AG04449 (cell line): ENCODE measurements at regions of chr17 and their contacts with region 1.

Region 1: DNA sequence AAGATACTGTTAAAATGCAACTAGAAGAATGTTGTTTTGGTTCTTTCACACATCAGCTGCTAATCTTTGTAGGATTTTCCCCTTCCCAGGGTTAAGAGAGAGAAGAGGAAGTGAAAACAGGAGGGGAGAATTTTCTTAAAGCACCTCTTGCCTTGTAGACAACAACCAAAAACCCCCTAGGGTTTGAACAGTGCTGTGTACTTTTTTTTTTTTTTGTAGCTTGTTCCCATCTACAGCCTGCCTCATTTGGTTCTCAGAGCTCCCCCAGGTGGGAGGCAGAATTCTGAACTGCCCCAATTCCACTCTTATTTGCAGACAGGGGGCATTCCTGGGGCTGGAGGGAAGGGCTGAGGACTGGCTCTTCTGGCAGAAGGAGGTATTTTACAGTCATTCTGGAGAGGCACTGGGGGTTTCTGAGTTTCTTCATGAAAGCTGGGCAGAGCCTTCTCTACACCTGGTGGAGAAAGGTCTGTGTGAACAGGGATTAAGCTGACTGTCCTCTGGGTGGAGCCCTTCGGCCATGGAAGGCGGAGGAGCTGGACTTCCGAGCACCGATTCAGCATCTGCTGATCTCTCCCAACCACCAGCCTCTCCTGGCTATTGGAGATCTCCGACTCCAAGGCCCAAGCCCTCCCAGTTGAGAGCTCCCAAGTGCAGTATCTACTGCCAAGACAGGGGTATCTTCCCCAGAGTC is 32.2 kb downstream of the SMARCE1 start:
- DNase-seq: no peak
- H3K4me3 ChIP-seq: no peak overlapping the region
- CTCF ChIP-seq: peak; percentile 42

Region 2: DNA sequence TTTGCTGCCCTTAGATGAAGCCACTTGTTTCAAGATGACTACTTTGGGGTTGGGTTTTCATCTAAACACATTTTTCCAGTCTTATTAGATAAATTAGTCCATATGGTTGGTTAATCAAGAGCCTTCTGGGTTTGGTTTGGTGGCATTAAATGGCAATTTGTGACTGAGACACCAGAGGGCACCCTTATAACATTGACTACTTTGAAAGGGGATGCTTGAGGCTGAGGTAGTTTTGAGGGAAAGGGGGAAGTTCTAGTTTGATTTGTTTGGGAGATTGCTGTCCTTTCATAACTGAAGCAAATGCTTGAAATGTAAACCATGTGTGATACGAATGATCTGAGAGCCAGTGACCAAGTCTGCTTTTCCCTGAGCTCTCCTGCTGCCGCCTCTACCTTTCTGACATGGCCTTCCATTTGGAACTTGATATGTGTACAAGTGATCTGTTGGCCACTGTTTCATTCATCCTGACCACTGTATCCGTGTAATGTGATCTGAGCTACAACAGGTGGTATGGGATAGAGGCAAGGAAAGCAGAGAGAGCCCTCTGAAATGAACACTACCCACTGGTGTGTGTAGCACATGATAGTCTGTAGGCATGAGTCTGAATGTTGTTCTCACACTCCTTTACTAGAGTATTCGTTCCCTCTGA is 312.3 kb before region 1 on chr17:
- CTCF ChIA-PET with region 1: no interaction called
- POLR2A ChIA-PET with region 1: no interaction called
- DNase-seq: no peak
- H3K4me3 ChIP-seq: no peak overlapping the region
- CTCF ChIP-seq: peak; percentile 58

Region 3: GRCh38 chr17:40602775-40603551 is 12.5 kb before region 1 on chr17:
- CTCF ChIA-PET with region 1: interaction called, 20 read pairs
- POLR2A ChIA-PET with region 1: no interaction called
- DNase-seq: no peak
- H3K4me3 ChIP-seq: no peak overlapping the region
- CTCF ChIP-seq: no peak

Region 4: GRCh38 chr17:40633871-40634270 is 18.4 kb after region 1 on chr17:
- CTCF ChIA-PET with region 1: interaction called, 31 read pairs
- POLR2A ChIA-PET with region 1: no interaction called
- DNase-seq: no peak
- H3K4me3 ChIP-seq: no peak overlapping the region
- CTCF ChIP-seq: no peak

Region 5: DNA sequence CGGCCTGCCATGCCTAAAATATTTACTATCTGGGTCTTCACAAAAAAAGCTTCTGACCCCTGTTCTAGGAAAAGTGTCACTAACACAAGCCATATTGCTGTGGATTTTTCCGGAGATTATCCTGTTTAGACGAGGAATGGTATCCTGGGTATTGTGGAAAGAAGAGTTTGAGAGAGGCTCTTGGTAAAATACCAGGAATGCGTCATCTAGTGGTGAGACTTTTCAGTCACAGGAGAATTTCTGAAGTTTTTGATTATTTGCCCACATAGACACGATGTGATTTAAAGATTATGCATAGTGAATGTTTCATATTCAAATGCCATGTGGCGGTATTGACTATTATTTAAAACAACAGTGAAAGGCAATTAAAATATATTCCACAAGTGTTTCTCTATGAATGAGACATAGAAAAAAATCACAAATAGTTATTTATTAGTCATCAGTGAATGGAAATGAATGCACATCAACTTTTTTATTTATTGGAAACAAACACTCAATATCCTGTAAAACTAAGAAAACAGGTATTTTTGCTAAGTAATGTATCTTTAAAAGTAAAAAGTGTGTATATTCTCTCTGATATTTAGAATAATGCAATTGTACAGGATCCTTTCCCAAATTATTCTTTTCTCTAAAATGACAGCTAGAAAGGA is 176.5 kb after region 1 on chr17:
- CTCF ChIA-PET with region 1: interaction called, 159 read pairs
- POLR2A ChIA-PET with region 1: no interaction called
- DNase-seq: no peak
- H3K4me3 ChIP-seq: no peak overlapping the region
- CTCF ChIP-seq: peak; percentile 48